Panc1 (cell line): ENCODE measurements at regions of chr12 and their contacts with region 1.

Region 1: GRCh38 chr12:87953256-87953860 is 75.8 kb downstream of the C12orf50 start:
- DNase-seq: peak; percentile 8
- ATAC-seq: no peak
- H3K4me3 ChIP-seq: no peak overlapping the region
- H3K27ac ChIP-seq: no peak overlapping the region
- H3K4me1 ChIP-seq: no peaks in the 10 kb centered on the region
- H3K27me3 ChIP-seq: no peaks in the 10 kb centered on the region
- CTCF ChIP-seq: peak; percentile 64; the same call in 1 of the 2 replicates

Region 2: GRCh38 chr12:86264451-86265342 is 1688.7 kb before region 1 on chr12:
- CTCF ChIA-PET with region 1: interaction called, 10 read pairs
- POLR2A ChIA-PET with region 1: no interaction called
- in situ Hi-C with region 1: no loop called
- intact Hi-C with region 1: no loop called
- DNase-seq: no peak
- ATAC-seq: peak; percentile 94
- H3K4me3 ChIP-seq: peak overlapping the region; percentile 37 to 59
- H3K27ac ChIP-seq: no peak overlapping the region
- H3K4me1 ChIP-seq: no peaks in the 10 kb centered on the region
- H3K27me3 ChIP-seq: no peaks in the 10 kb centered on the region
- CTCF ChIP-seq: no peak

Region 3: DNA sequence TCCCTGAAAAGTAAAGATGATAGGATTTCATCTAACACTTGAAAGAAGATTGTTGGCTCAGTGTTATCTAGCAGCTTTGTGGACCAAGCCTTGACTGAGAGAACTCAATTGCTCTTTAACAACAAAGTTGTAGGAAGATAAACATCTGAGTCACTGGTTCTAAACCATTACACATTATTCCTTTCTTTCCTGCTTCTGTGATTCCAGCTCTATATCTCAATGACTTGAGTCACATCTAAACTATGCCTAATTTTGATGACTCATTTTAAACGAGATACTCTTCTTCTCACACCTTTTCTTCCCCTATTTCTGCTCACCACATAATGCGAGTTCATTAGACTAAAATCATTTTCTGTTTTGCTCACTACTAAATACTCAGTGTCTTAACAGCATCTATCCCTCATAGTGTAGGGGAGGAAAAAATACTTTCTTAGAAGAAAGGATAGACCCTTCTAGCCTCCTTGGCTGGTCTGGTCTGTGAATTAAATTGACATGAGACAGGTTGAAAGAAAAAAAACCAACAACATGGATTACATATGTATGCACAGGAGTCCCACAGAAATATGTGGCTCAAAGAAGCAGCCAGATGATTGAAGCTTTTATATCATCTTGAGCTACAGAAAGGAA is 125.6 kb before region 1 on chr12:
- CTCF ChIA-PET with region 1: no interaction called
- POLR2A ChIA-PET with region 1: no interaction called
- in situ Hi-C with region 1: no loop called
- intact Hi-C with region 1: no loop called
- DNase-seq: no peak
- ATAC-seq: peak; percentile 79
- H3K4me3 ChIP-seq: no peak overlapping the region
- H3K27ac ChIP-seq: no peak overlapping the region
- H3K4me1 ChIP-seq: no peaks in the 10 kb centered on the region; the same call in 1 of the 2 replicates
- H3K27me3 ChIP-seq: no peaks in the 10 kb centered on the region
- CTCF ChIP-seq: no peak

Region 4: DNA sequence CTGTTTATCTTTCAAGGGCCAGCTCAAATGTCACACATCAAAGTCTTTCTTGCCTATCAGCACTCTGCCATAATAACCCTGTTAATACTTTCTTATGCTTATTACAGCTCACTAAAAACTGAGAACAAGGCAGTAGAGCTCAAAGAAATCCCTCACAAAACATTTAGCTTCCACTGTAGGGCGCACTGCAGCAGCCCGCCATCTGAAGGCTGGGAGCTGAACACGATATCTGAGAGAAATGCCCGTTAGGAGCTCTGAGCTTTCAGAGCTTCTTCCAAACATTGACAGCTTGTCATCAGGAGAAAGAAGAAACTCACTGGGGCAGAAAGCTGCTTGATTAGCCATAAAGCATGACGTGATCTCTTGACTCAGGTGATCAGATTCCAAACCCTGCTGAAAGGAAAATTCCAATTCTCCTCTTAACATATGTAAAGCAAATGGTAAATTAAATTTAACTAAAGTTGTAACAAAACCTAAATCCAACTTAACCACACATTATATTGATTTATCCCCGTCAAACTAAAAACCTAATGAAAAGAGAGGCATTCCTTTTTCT is 99.8 kb before region 1 on chr12:
- CTCF ChIA-PET with region 1: no interaction called
- POLR2A ChIA-PET with region 1: no interaction called
- in situ Hi-C with region 1: no loop called
- intact Hi-C with region 1: no loop called
- DNase-seq: no peak
- ATAC-seq: no peak
- H3K4me3 ChIP-seq: no peak overlapping the region
- H3K27ac ChIP-seq: no peak overlapping the region
- H3K4me1 ChIP-seq: no peaks in the 10 kb centered on the region
- H3K27me3 ChIP-seq: no peaks in the 10 kb centered on the region
- CTCF ChIP-seq: no peak

Region 5: DNA sequence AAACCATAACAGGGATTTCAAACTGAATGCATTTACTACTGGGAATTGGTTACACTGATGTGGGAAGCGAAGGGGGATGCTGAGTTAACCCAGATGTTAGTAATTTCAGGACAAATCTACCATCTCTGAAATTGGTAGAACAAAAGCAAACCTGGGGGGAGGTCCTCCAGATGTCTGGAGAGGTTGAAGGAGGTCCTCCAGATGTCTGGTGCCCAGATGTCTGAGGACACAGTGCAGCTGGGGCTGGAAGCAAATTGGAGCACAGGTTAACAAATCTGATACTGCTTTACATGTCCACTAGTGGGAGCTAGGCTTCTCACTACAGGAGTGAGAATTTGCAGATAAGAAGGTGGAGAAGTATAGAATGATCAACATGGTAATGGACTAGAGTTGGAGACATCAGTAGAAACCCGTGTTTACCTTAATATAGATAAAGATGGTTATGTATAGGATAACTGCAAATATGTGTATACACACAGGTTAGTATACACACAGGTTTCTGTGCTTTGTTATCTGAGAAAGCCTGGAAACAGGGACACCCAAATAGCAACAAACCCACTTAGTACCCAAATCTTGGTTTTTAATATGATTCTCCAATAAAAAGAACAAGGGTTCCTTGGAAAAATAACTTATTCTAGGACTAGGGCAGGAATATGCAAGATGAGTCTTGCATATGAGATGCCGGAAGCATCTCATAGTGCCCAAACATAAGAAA is 86.6 kb before region 1 on chr12:
- CTCF ChIA-PET with region 1: no interaction called
- POLR2A ChIA-PET with region 1: no interaction called
- in situ Hi-C with region 1: no loop called
- intact Hi-C with region 1: loop called (anchors 5 kb)
- DNase-seq: no peak
- ATAC-seq: no peak; the same call in 1 of the 2 replicates
- H3K4me3 ChIP-seq: no peak overlapping the region
- H3K27ac ChIP-seq: no peak overlapping the region
- H3K4me1 ChIP-seq: no peaks in the 10 kb centered on the region
- H3K27me3 ChIP-seq: no peaks in the 10 kb centered on the region
- CTCF ChIP-seq: peak; percentile 53

Region 6: DNA sequence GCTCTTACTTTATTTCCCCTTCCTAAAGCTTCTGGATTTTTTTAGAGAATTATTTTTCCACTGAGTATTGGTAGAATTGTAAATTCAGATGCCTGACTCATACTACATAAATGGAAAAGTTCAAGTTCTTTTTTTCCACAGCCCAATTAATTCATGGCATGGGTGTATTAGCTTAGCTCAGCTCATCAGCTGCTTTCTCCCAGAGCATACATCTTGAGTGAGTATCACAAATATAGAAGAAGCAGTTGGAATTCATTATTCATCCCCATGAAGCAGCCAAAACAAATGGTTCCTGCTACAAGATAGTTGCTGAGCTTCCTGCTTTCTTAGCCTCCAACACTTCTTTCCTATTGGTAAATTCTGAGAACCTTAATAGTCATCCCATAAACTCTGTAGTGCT is 29.2 kb before region 1 on chr12:
- CTCF ChIA-PET with region 1: no interaction called
- POLR2A ChIA-PET with region 1: no interaction called
- in situ Hi-C with region 1: no loop called
- intact Hi-C with region 1: no loop called
- DNase-seq: no peak
- ATAC-seq: no peak
- H3K4me3 ChIP-seq: no peak overlapping the region
- H3K27ac ChIP-seq: no peak overlapping the region
- H3K4me1 ChIP-seq: no peaks in the 10 kb centered on the region
- H3K27me3 ChIP-seq: no peaks in the 10 kb centered on the region; the same call in 1 of the 2 replicates
- CTCF ChIP-seq: no peak

Region 7: GRCh38 chr12:88052686-88053085 is 99.3 kb after region 1 on chr12:
- CTCF ChIA-PET with region 1: interaction called, 10 read pairs
- POLR2A ChIA-PET with region 1: no interaction called
- in situ Hi-C with region 1: no loop called
- intact Hi-C with region 1: no loop called
- DNase-seq: no peak
- ATAC-seq: peak; percentile 95
- H3K4me3 ChIP-seq: no peak overlapping the region
- H3K27ac ChIP-seq: no peak overlapping the region
- H3K4me1 ChIP-seq: no peaks in the 10 kb centered on the region
- H3K27me3 ChIP-seq: no peaks in the 10 kb centered on the region
- CTCF ChIP-seq: peak; percentile 76